ENCODE measurements at regions of chr1 and their contacts with region 1.

Region 1: GRCh38 chr1:13662493-13662892 is 37.5 kb upstream of the PRDM2 start:
- DNase-seq: peak in 1 of 2 experiments; percentile 13
- H3K4me3 ChIP-seq: no peak overlapping the region
- H3K4me1 ChIP-seq: peaks cover 5% of the 10 kb centered on the region
- H3K27me3 ChIP-seq: no peaks in the 10 kb centered on the region

Region 2: GRCh38 chr1:13605159-13605558 is 57.3 kb before region 1 on chr1:
- in situ Hi-C with region 1: no loop called
- DNase-seq: no peak
- H3K4me3 ChIP-seq: no peak overlapping the region
- H3K4me1 ChIP-seq: peaks cover 25% of the 10 kb centered on the region
- H3K27me3 ChIP-seq: no peaks in the 10 kb centered on the region

Region 3: GRCh38 chr1:13813398-13814012 is 151.0 kb after region 1 on chr1:
- in situ Hi-C with region 1: no loop called
- DNase-seq: peak in 1 of 2 experiments; percentile 62
- H3K4me3 ChIP-seq: no peak overlapping the region
- H3K4me1 ChIP-seq: no peaks in the 10 kb centered on the region; the same call in 1 of the 2 replicates
- H3K27me3 ChIP-seq: no peaks in the 10 kb centered on the region

Region 4: DNA sequence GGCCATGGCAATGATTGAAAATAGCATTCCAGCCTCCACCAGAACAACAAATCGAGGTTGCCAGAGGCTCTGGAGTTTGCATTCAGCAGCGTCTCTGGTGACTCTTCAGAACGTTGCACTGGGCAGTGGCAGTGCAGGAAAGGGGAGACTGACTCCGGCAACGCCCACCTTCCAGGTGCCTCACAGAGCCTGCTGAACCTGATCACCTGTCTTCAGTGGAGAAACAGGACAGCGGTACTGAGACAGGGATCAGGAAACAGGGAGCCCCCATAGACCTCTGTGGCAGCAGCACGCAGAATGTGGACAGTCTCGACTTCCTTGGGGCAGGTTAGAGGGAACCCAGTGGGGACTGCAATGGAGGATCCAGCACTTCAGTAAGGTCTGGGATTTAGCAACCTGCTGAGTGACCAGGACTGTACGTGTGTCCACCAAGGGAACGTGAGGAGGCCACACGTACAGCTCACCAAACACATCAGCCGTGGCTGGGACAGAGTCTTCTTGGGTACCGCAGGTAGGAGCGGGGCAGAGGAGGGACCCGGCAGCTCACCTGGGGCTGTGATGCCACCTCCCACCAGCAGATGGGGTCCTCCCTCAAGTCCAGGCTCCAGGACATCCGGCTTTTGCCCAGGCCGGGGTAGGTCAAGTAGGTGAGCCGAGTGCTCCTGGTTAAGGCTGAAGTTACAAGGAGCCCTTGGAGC is 166.1 kb after region 1 on chr1:
- in situ Hi-C with region 1: loop called (anchors 10 kb)
- DNase-seq: peak; percentile 9 to 69
- H3K4me3 ChIP-seq: no peak overlapping the region; the same call in 1 of the 2 replicates
- H3K4me1 ChIP-seq: no peaks in the 10 kb centered on the region
- H3K27me3 ChIP-seq: no peaks in the 10 kb centered on the region

Region 5: GRCh38 chr1:13950637-13951036 is 288.1 kb after region 1 on chr1:
- in situ Hi-C with region 1: loop called (anchors 10 kb)
- DNase-seq: peak in 1 of 2 experiments; percentile 36
- H3K4me3 ChIP-seq: no peak overlapping the region
- H3K4me1 ChIP-seq: no peaks in the 10 kb centered on the region
- H3K27me3 ChIP-seq: peaks cover 12% of the 10 kb centered on the region

Measured in HAP-1 (cell line).